ENCODE measurements at regions of chr7 and their contacts with region 1.

Region 1: DNA sequence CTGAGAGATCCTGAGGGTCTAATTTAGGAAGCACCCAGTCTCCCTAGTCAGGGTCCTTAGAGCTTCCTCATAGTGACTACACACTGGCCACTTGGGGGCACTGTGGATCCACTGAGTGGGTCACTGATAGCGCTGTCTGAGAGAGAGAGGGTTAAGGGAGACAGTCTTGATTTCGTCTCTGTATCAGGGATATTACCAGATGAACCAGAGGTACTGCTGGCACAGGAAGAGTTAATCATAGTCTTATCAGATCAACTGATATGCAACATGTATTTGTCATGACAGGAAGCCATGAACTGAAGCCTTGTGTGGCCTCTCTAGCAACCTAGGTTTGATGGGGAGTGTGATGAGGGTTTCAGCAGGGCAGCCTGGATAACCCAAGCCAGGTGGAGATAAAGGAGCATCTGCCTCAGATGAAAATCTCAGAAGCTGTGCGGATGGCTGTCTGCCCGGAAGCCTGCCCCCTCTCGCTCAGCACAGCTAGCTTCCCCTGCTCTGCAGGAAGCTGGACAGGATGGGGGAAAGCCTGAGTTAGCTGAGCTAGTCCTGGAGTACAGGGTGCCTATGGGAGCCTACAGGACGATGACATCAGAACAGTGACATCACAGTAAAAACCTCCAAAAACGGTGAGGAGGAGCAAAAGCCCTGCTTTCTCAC is 214.0 kb upstream of the PRSS1 start:
- DNase-seq: peak; percentile 40 to 78 (median 68)
- ATAC-seq: peak; percentile 93
- H3K4me3 ChIP-seq: peak overlapping the region; percentile 10
- H3K4me3 Mint-ChIP-seq: peak overlapping the region; percentile 54 to 87 (median 70)
- H3K27ac ChIP-seq: peak overlapping the region; percentile 47
- H3K27ac Mint-ChIP-seq: peak overlapping the region; percentile 61 to 91 (median 77)
- H3K4me1 ChIP-seq: peaks cover 3 to 31% of the 10 kb centered on the region in 2 donors
- H3K4me1 Mint-ChIP-seq: peaks cover 4 to 38% (median 31%) of the 10 kb centered on the region in 7 donors
- H3K27me3 ChIP-seq: no peaks in the 10 kb centered on the region
- H3K27me3 Mint-ChIP-seq: peaks cover 0 to 5% (median 0%) of the 10 kb centered on the region in 5 donors

Region 2: GRCh38 chr7:141874787-141875186 is 660.5 kb before region 1 on chr7:
- CTCF ChIA-PET with region 1: no interaction called
- POLR2A ChIA-PET with region 1: no interaction called
- intact Hi-C with region 1: no loop called
- DNase-seq: no peak
- ATAC-seq: peak; percentile 29
- H3K4me3 ChIP-seq: no peak overlapping the region
- H3K4me3 Mint-ChIP-seq: no peak overlapping the region
- H3K27ac ChIP-seq: no peak overlapping the region
- H3K27ac Mint-ChIP-seq: no peak overlapping the region
- H3K4me1 ChIP-seq: no peaks in the 10 kb centered on the region
- H3K4me1 Mint-ChIP-seq: no peaks in the 10 kb centered on the region
- H3K27me3 ChIP-seq: no peaks in the 10 kb centered on the region
- H3K27me3 Mint-ChIP-seq: peaks cover 0 to 4% (median 0%) of the 10 kb centered on the region in 5 donors

Region 3: GRCh38 chr7:142516038-142516501 is 19.2 kb before region 1 on chr7:
- CTCF ChIA-PET with region 1: interaction called, 6 read pairs
- POLR2A ChIA-PET with region 1: no interaction called
- intact Hi-C with region 1: loop called in 1 of 2 experiments (anchors 1 kb)
- DNase-seq: peak in 5 of 9 donors; percentile 42 to 55 (median 47)
- ATAC-seq: peak; percentile 85
- H3K4me3 ChIP-seq: no peak overlapping the region
- H3K4me3 Mint-ChIP-seq: peak overlapping the region in 7 of 10 donors; percentile 4 to 81 (median 46)
- H3K27ac ChIP-seq: no peak overlapping the region
- H3K27ac Mint-ChIP-seq: peak overlapping the region in 8 of 9 donors; percentile 32 to 92 (median 74)
- H3K4me1 ChIP-seq: peaks cover 0 to 35% of the 10 kb centered on the region in 2 donors
- H3K4me1 Mint-ChIP-seq: peaks cover 19 to 67% (median 56%) of the 10 kb centered on the region in 7 donors
- H3K27me3 ChIP-seq: no peaks in the 10 kb centered on the region
- H3K27me3 Mint-ChIP-seq: peaks cover 0 to 10% (median 0%) of the 10 kb centered on the region in 5 donors

Region 4: GRCh38 chr7:142557971-142558582 is 22.8 kb after region 1 on chr7:
- CTCF ChIA-PET with region 1: interaction called, 12 read pairs
- POLR2A ChIA-PET with region 1: interaction called, 5 read pairs
- intact Hi-C with region 1: loop called in 1 of 2 experiments (anchors 1 kb)
- DNase-seq: peak; percentile 24 to 56 (median 42)
- ATAC-seq: peak; percentile 87
- H3K4me3 ChIP-seq: no peak overlapping the region
- H3K4me3 Mint-ChIP-seq: peak overlapping the region; percentile 18 to 73 (median 59)
- H3K27ac ChIP-seq: no peak overlapping the region
- H3K27ac Mint-ChIP-seq: peak overlapping the region in 4 of 9 donors; percentile 6 to 73 (median 48)
- H3K4me1 ChIP-seq: no peaks in the 10 kb centered on the region
- H3K4me1 Mint-ChIP-seq: peaks cover 0 to 26% (median 5%) of the 10 kb centered on the region in 7 donors
- H3K27me3 ChIP-seq: no peaks in the 10 kb centered on the region
- H3K27me3 Mint-ChIP-seq: peaks cover 0 to 24% (median 4%) of the 10 kb centered on the region in 5 donors

Region 5: GRCh38 chr7:142603870-142604448 is 68.7 kb after region 1 on chr7:
- CTCF ChIA-PET with region 1: interaction called, 12 read pairs
- POLR2A ChIA-PET with region 1: no interaction called
- intact Hi-C with region 1: loop called in 1 of 2 experiments (anchors 1 kb)
- DNase-seq: peak in 8 of 9 donors; percentile 34 to 67 (median 56)
- ATAC-seq: peak; percentile 82
- H3K4me3 ChIP-seq: no peak overlapping the region
- H3K4me3 Mint-ChIP-seq: peak overlapping the region in 9 of 10 donors; percentile 38 to 66 (median 55)
- H3K27ac ChIP-seq: no peak overlapping the region
- H3K27ac Mint-ChIP-seq: peak overlapping the region in 6 of 9 donors; percentile 3 to 90 (median 58)
- H3K4me1 ChIP-seq: no peaks in the 10 kb centered on the region
- H3K4me1 Mint-ChIP-seq: peaks cover 0 to 18% (median 12%) of the 10 kb centered on the region in 7 donors
- H3K27me3 ChIP-seq: no peaks in the 10 kb centered on the region
- H3K27me3 Mint-ChIP-seq: peaks cover 0 to 19% (median 0%) of the 10 kb centered on the region in 5 donors

Region 6: DNA sequence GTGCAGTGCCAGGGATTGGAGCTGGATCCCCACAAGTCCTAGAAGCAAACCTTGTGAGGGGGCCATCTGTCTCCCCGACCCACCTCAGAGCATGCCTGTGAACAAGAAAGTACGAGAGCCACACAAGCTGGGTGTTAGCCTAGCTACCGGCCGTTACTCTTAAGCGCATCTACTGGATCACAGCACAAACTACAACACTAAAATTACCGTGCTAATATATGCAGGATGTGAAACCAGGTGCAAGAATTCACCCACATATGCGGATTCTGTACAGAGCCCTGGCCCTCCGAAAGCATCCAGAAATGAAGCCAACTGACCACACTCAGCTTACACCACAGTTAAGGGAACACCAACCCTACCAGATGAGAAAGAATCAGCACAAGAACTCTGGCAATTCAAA is 198.0 kb after region 1 on chr7:
- CTCF ChIA-PET with region 1: no interaction called
- POLR2A ChIA-PET with region 1: no interaction called
- intact Hi-C with region 1: no loop called
- DNase-seq: no peak
- ATAC-seq: no peak
- H3K4me3 ChIP-seq: no peak overlapping the region
- H3K4me3 Mint-ChIP-seq: peak overlapping the region in 1 of 10 donors; percentile 20
- H3K27ac ChIP-seq: no peak overlapping the region
- H3K27ac Mint-ChIP-seq: no peak overlapping the region
- H3K4me1 ChIP-seq: no peaks in the 10 kb centered on the region
- H3K4me1 Mint-ChIP-seq: peaks cover 0 to 1% (median 0%) of the 10 kb centered on the region in 7 donors
- H3K27me3 ChIP-seq: no peaks in the 10 kb centered on the region
- H3K27me3 Mint-ChIP-seq: peaks cover 0 to 7% (median 0%) of the 10 kb centered on the region in 5 donors

Region 7: DNA sequence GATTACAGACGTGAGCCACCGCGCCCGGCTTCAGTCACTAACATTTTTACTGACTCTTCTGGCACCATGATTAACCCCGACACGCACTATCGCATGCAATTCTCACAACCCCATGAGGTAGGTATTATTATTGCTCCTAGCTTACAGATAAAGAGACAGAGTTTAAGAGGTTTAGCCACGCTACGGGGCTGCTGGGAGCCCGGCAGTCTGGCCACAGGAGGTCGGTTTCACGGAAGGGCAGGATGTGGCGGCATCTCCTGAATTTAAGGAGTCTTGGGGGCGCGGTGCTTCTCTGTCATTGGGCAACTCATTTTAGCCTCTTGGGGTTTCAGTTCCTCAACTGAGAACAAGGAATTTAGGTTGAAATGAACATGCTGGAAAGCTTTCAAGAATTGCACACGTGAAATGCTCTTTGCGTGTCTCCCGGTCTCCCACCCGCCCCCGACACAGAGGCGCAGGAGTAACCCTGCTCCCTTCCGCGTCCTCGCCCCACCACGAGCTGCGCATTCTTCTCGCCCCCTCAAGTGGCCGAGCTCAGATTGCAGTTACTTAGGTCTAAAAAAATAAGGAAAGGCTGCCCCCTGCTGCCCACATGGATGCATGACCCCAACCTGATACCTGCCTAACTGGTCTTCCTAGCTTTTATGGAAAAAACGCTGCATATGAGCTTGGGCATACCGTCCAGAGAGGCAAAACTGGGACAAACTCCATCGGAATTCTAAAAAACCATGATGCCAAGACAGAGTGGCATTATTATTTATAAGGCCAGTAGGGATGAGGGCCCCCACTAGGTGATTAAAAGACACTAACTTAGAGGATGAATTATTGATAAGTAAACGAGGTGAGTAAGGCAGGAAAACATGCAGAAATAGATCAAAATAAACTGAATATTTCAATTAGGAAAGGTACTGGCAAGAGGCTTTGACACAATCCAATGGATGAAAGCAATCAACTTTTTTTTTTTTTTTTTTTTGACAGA is 248.0 kb after region 1 on chr7:
- CTCF ChIA-PET with region 1: no interaction called
- POLR2A ChIA-PET with region 1: no interaction called
- intact Hi-C with region 1: loop called in 1 of 2 experiments (anchors 1 kb)
- DNase-seq: peak; percentile 54 to 84 (median 77)
- ATAC-seq: peak; percentile 74
- H3K4me3 ChIP-seq: peak overlapping the region; percentile 52
- H3K4me3 Mint-ChIP-seq: peak overlapping the region; percentile 70 to 99 (median 86)
- H3K27ac ChIP-seq: peak overlapping the region; percentile 98
- H3K27ac Mint-ChIP-seq: peak overlapping the region; percentile 75 to 100 (median 99)
- H3K4me1 ChIP-seq: peaks cover 0 to 5% of the 10 kb centered on the region in 2 donors
- H3K4me1 Mint-ChIP-seq: peaks cover 0 to 16% (median 10%) of the 10 kb centered on the region in 7 donors
- H3K27me3 ChIP-seq: no peaks in the 10 kb centered on the region
- H3K27me3 Mint-ChIP-seq: no peaks in the 10 kb centered on the region

Region 8: GRCh38 chr7:142853739-142854371 is 318.6 kb after region 1 on chr7:
- CTCF ChIA-PET with region 1: interaction called, 4 read pairs
- POLR2A ChIA-PET with region 1: no interaction called
- intact Hi-C with region 1: loop called in 1 of 2 experiments (anchors 1 kb)
- DNase-seq: peak; percentile 56 to 74 (median 68)
- ATAC-seq: peak; percentile 88
- H3K4me3 ChIP-seq: peak overlapping the region; percentile 85
- H3K4me3 Mint-ChIP-seq: peak overlapping the region; percentile 90 to 99 (median 97)
- H3K27ac ChIP-seq: peak overlapping the region; percentile 69
- H3K27ac Mint-ChIP-seq: peak overlapping the region; percentile 37 to 92 (median 89)
- H3K4me1 ChIP-seq: peaks cover 4 to 12% of the 10 kb centered on the region in 2 donors
- H3K4me1 Mint-ChIP-seq: peaks cover 17 to 61% (median 39%) of the 10 kb centered on the region in 7 donors
- H3K27me3 ChIP-seq: no peaks in the 10 kb centered on the region
- H3K27me3 Mint-ChIP-seq: peaks cover 0 to 30% (median 0%) of the 10 kb centered on the region in 5 donors

Region 9: GRCh38 chr7:142954680-142955268 is 419.5 kb after region 1 on chr7:
- CTCF ChIA-PET with region 1: no interaction called
- POLR2A ChIA-PET with region 1: no interaction called
- intact Hi-C with region 1: no loop called
- DNase-seq: no peak
- ATAC-seq: no peak
- H3K4me3 ChIP-seq: no peak overlapping the region
- H3K4me3 Mint-ChIP-seq: no peak overlapping the region
- H3K27ac ChIP-seq: no peak overlapping the region
- H3K27ac Mint-ChIP-seq: no peak overlapping the region
- H3K4me1 ChIP-seq: no peaks in the 10 kb centered on the region
- H3K4me1 Mint-ChIP-seq: no peaks in the 10 kb centered on the region
- H3K27me3 ChIP-seq: no peaks in the 10 kb centered on the region
- H3K27me3 Mint-ChIP-seq: peaks cover 7 to 31% (median 13%) of the 10 kb centered on the region in 5 donors

Region 10: GRCh38 chr7:143214789-143215679 is 679.8 kb after region 1 on chr7:
- CTCF ChIA-PET with region 1: no interaction called
- POLR2A ChIA-PET with region 1: no interaction called
- intact Hi-C with region 1: loop called (anchors 1 to 10 kb)
- DNase-seq: peak; percentile 26 to 81 (median 75)
- ATAC-seq: peak; percentile 99
- H3K4me3 ChIP-seq: no peak overlapping the region
- H3K4me3 Mint-ChIP-seq: no peak overlapping the region
- H3K27ac ChIP-seq: no peak overlapping the region
- H3K27ac Mint-ChIP-seq: peak overlapping the region in 1 of 9 donors; percentile 13
- H3K4me1 ChIP-seq: no peaks in the 10 kb centered on the region
- H3K4me1 Mint-ChIP-seq: no peaks in the 10 kb centered on the region
- H3K27me3 ChIP-seq: no peaks in the 10 kb centered on the region
- H3K27me3 Mint-ChIP-seq: peaks cover 0 to 21% (median 4%) of the 10 kb centered on the region in 5 donors

Measured in naive thymus-derived CD4-positive, alpha-beta T cell (primary cell).